ENCODE measurements at regions of chr2 and their contacts with region 1.

Region 1: DNA sequence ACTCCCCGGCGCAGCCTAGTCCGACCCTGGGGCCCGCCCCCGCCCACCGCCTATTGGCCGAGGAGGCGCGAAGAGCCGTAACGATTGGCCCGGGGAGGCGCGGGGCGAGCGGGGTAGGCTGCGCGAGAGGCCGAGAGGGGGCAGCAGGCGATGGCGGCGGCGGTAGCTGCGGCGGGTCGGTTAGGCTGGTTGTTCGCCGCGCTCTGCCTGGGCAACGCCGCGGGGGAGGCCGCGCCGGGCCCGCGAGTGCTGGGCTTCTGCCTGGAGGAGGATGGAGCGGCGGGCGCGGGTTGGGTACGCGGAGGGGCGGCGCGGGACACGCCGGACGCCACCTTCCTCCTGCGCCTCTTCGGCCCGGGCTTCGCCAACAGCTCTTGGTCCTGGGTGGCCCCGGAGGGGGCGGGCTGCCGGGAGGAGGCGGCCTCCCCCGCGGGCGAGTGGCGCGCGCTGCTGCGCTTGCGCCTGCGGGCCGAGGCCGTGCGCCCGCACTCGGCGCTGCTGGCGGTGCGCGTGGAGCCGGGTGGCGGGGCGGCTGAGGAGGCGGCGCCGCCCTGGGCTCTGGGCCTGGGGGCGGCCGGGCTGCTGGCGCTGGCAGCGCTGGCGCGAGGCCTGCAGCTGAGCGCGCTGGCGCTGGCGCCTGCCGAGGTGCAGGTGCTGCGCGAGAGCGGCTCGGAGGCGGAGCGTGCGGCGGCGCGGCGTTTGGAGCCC is at the start of gene CNNM3:
- DNase-seq: peak; percentile 90 to 98 (median 96)
- ATAC-seq: peak; percentile 91
- H3K4me3 ChIP-seq: peak within 1 kb of the TSS; percentile 77
- H3K4me3 Mint-ChIP-seq: peak within 1 kb of the TSS; percentile 94
- H3K27ac ChIP-seq: peak within 1 kb of the TSS; percentile 52 to 60
- H3K27ac Mint-ChIP-seq: peak within 1 kb of the TSS; percentile 88
- H3K4me1 ChIP-seq: peaks cover 49% of the 10 kb centered on the region
- H3K4me1 Mint-ChIP-seq: peaks cover 62% of the 10 kb centered on the region
- H3K27me3 ChIP-seq: no peaks in the 10 kb centered on the region
- H3K27me3 Mint-ChIP-seq: no peaks in the 10 kb centered on the region
- CTCF ChIP-seq: peak; percentile 65
- total RNA-seq, gene CNNM3: 48.7 to 53.5 TPM

Region 2: GRCh38 chr2:96715658-96716057 is 100.6 kb before region 1 on chr2:
- CTCF ChIA-PET with region 1: no interaction called
- POLR2A ChIA-PET with region 1: no interaction called
- intact Hi-C with region 1: no loop called
- DNase-seq: no peak
- ATAC-seq: no peak
- H3K4me3 ChIP-seq: no peak overlapping the region
- H3K4me3 Mint-ChIP-seq: no peak overlapping the region
- H3K27ac ChIP-seq: no peak overlapping the region
- H3K27ac Mint-ChIP-seq: no peak overlapping the region
- H3K4me1 ChIP-seq: no peaks in the 10 kb centered on the region
- H3K4me1 Mint-ChIP-seq: no peaks in the 10 kb centered on the region
- H3K27me3 ChIP-seq: no peaks in the 10 kb centered on the region
- H3K27me3 Mint-ChIP-seq: no peaks in the 10 kb centered on the region
- CTCF ChIP-seq: no peak

Region 3: GRCh38 chr2:96751775-96752174 is 64.5 kb before region 1 on chr2:
- CTCF ChIA-PET with region 1: no interaction called
- POLR2A ChIA-PET with region 1: no interaction called
- intact Hi-C with region 1: no loop called
- DNase-seq: no peak
- ATAC-seq: no peak
- H3K4me3 ChIP-seq: no peak overlapping the region
- H3K4me3 Mint-ChIP-seq: no peak overlapping the region
- H3K27ac ChIP-seq: no peak overlapping the region
- H3K27ac Mint-ChIP-seq: no peak overlapping the region
- H3K4me1 ChIP-seq: no peaks in the 10 kb centered on the region
- H3K4me1 Mint-ChIP-seq: no peaks in the 10 kb centered on the region
- H3K27me3 ChIP-seq: no peaks in the 10 kb centered on the region
- H3K27me3 Mint-ChIP-seq: no peaks in the 10 kb centered on the region
- CTCF ChIP-seq: no peak

Region 4: DNA sequence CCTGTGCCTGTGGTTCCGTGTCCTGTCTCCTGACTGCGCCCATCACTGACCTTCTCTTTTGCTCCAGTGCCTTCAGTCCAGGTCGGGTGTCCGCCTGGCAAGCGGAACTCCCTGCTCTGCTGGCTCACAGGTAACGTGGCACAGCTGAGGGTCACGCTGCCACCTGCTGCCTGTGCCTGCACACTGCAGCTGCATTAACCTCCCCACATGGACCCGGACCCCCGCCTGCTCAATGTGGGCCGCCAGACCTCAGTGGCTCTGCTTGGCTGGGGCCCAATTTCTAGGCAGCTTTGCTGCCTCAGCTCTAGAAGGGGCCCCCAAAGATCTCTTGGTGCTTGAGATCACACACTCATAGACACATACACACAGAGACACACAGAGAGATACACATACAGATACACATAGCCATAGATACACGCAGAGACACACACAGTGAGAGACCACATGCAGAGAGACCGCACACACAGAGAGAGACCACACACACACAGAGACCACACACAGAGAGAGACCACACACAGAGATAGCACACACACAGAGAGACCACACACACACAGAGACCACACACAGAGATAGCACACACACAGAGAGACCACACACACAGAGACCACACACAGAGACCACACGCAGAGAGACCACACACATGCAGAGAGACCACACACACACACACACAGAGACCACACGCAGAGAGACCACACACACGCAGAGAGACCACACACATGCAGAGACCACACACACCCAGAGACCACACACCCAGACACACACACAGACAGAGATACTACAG is 15.1 kb before region 1 on chr2:
- CTCF ChIA-PET with region 1: interaction called, 3 read pairs
- POLR2A ChIA-PET with region 1: interaction called, 50 read pairs
- intact Hi-C with region 1: loop called in 1 of 2 experiments (anchors 1 kb)
- DNase-seq: peak; percentile 60 to 83 (median 67)
- ATAC-seq: peak; percentile 99
- H3K4me3 ChIP-seq: no peak overlapping the region
- H3K4me3 Mint-ChIP-seq: no peak overlapping the region
- H3K27ac ChIP-seq: no peak overlapping the region
- H3K27ac Mint-ChIP-seq: no peak overlapping the region
- H3K4me1 ChIP-seq: peaks cover 27% of the 10 kb centered on the region
- H3K4me1 Mint-ChIP-seq: peaks cover 7% of the 10 kb centered on the region
- H3K27me3 ChIP-seq: no peaks in the 10 kb centered on the region
- H3K27me3 Mint-ChIP-seq: no peaks in the 10 kb centered on the region
- CTCF ChIP-seq: peak; percentile 76

Region 5: DNA sequence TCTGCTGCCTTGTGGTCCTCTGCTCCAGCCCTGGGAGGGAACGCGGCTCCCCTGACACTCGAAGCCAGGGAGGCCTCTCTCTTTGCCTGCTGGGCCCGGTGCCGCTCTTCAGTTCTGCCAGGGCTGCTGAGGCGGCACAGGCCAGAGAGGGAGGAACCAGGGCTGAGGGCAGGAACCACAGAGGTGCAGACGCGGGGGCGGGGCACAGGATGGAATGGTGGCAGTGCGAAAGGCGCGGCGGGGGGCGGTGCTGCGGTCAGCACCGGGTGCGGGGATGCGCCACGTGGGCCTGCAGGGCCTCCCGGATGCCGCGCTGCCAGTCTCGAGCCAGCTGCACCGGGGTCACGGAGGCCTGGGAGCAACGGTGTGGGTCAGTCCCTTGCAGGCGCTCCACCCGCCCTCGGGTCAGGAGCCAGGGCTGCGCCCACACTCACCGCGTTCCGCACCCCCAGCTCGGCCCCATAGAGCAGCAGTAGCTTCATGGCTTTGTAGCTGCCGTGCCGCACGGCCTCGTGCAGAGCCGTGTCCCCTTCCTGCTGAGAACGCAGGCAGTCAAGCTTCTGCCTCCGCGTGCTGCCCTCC is 23.1 kb after region 1 on chr2:
- CTCF ChIA-PET with region 1: interaction called, 3 read pairs
- POLR2A ChIA-PET with region 1: interaction called, 15 read pairs
- intact Hi-C with region 1: loop called in 1 of 2 experiments (anchors 1 kb)
- DNase-seq: peak; percentile 66 to 92 (median 84)
- ATAC-seq: peak; percentile 98
- H3K4me3 ChIP-seq: peak overlapping the region; percentile 46
- H3K4me3 Mint-ChIP-seq: peak overlapping the region; percentile 70
- H3K27ac ChIP-seq: no peak overlapping the region
- H3K27ac Mint-ChIP-seq: peak overlapping the region; percentile 68
- H3K4me1 ChIP-seq: peaks cover 22% of the 10 kb centered on the region
- H3K4me1 Mint-ChIP-seq: peaks cover 21% of the 10 kb centered on the region
- H3K27me3 ChIP-seq: no peaks in the 10 kb centered on the region
- H3K27me3 Mint-ChIP-seq: no peaks in the 10 kb centered on the region
- CTCF ChIP-seq: no peak

Region 6: GRCh38 chr2:98175811-98176210 is 1359.5 kb after region 1 on chr2:
- CTCF ChIA-PET with region 1: no interaction called
- POLR2A ChIA-PET with region 1: no interaction called
- intact Hi-C with region 1: no loop called
- DNase-seq: peak in 1 of 14 experiments; percentile 16
- ATAC-seq: no peak
- H3K4me3 ChIP-seq: no peak overlapping the region
- H3K4me3 Mint-ChIP-seq: no peak overlapping the region
- H3K27ac ChIP-seq: no peak overlapping the region
- H3K27ac Mint-ChIP-seq: no peak overlapping the region
- H3K4me1 ChIP-seq: no peaks in the 10 kb centered on the region
- H3K4me1 Mint-ChIP-seq: no peaks in the 10 kb centered on the region
- H3K27me3 ChIP-seq: peaks cover 21 to 24% of the 10 kb centered on the region in 2 experiments
- H3K27me3 Mint-ChIP-seq: peaks cover 74% of the 10 kb centered on the region
- CTCF ChIP-seq: no peak

Measured in CD4-positive, alpha-beta T cell (primary cell).